ENCODE measurements at regions of chr13 and their contacts with region 1.

Region 1: DNA sequence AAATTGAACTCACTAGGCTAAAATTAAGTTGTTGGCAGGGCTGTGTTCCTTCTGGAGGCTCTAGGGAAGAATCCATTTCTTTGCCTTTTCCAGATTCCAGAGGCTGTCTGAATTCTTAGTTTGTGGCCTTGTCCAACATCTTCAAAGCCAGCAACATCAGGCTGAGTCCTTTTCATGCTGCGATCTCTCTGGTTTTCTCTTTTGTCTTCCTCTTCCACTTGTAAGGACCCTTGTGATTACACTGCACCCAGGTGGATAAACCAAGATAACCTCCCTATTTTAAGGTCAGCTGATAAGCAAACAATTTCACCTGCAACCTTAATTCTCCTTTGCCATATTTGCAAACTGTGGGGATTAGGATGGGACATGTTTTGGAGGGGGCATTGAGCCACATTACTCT is 11.5 kb downstream of the UTP14C start:
- DNase-seq: peak; percentile 56 to 62
- H3K4me3 ChIP-seq: no peak overlapping the region
- H3K4me3 Mint-ChIP-seq: no peak overlapping the region
- H3K27ac Mint-ChIP-seq: peak overlapping the region; percentile 7
- H3K4me1 ChIP-seq: peaks cover 17% of the 10 kb centered on the region
- H3K4me1 Mint-ChIP-seq: peaks cover 17% of the 10 kb centered on the region
- H3K27me3 ChIP-seq: no peaks in the 10 kb centered on the region
- H3K27me3 Mint-ChIP-seq: no peaks in the 10 kb centered on the region
- CTCF ChIP-seq: no peak

Region 2: DNA sequence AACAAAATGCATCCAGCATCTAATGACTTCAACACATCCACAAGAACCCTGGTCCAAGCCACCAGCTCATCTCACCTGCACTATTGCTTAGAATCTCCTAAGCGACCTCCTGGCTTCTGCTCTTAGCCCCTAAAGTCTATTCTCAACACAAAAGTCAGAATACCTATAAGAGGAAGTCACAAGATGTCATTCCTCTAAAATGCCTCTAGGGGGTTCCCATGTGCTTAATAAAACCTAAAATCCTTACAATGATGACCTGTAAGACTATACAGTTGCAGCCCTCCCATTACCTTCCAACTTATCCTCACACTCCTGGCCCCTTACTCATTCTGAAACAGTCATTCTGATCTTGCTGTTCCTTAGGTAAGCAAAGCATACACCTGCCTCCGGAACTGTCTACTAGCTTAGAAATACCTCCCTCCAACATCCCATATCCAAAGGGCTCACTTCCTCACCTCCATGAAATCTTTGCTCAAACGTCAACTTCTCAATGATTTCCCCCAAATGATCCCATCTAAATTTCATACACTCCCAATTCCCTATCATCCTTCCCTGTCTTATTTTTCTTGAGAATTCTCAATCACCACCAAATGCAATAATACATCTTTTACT is 34.8 kb before region 1 on chr13:
- CTCF ChIA-PET with region 1: interaction called, 3 read pairs
- POLR2A ChIA-PET with region 1: no interaction called
- intact Hi-C with region 1: loop called (anchors 1 kb)
- DNase-seq: no peak
- H3K4me3 ChIP-seq: no peak overlapping the region
- H3K4me3 Mint-ChIP-seq: no peak overlapping the region
- H3K27ac Mint-ChIP-seq: no peak overlapping the region
- H3K4me1 ChIP-seq: peaks cover 66% of the 10 kb centered on the region
- H3K4me1 Mint-ChIP-seq: peaks cover 58% of the 10 kb centered on the region
- H3K27me3 ChIP-seq: no peaks in the 10 kb centered on the region
- H3K27me3 Mint-ChIP-seq: no peaks in the 10 kb centered on the region
- CTCF ChIP-seq: peak; percentile 61 to 82

Region 3: GRCh38 chr13:52025475-52026245 is 10.4 kb before region 1 on chr13:
- CTCF ChIA-PET with region 1: no interaction called
- POLR2A ChIA-PET with region 1: no interaction called
- intact Hi-C with region 1: loop called (anchors 1 kb)
- DNase-seq: peak in 1 of 2 experiments; percentile 38
- H3K4me3 ChIP-seq: no peak overlapping the region
- H3K4me3 Mint-ChIP-seq: peak overlapping the region; percentile 6
- H3K27ac Mint-ChIP-seq: peak overlapping the region; percentile 35
- H3K4me1 ChIP-seq: peaks cover 17% of the 10 kb centered on the region
- H3K4me1 Mint-ChIP-seq: peaks cover 15% of the 10 kb centered on the region
- H3K27me3 ChIP-seq: no peaks in the 10 kb centered on the region
- H3K27me3 Mint-ChIP-seq: no peaks in the 10 kb centered on the region
- CTCF ChIP-seq: no peak

Region 4: GRCh38 chr13:52118595-52118994 is 82.6 kb after region 1 on chr13:
- CTCF ChIA-PET with region 1: no interaction called
- POLR2A ChIA-PET with region 1: no interaction called
- intact Hi-C with region 1: no loop called
- DNase-seq: no peak
- H3K4me3 ChIP-seq: no peak overlapping the region
- H3K4me3 Mint-ChIP-seq: no peak overlapping the region
- H3K27ac Mint-ChIP-seq: no peak overlapping the region
- H3K4me1 ChIP-seq: no peaks in the 10 kb centered on the region
- H3K4me1 Mint-ChIP-seq: no peaks in the 10 kb centered on the region
- H3K27me3 ChIP-seq: no peaks in the 10 kb centered on the region
- H3K27me3 Mint-ChIP-seq: no peaks in the 10 kb centered on the region
- CTCF ChIP-seq: no peak